Activated CD4-positive, alpha-beta T cell treated with anti-CD3 and anti-CD28 coated beads, Interleukin-2, amount 10 ng/mL, durations not matched to agents 24 days and 14 days (primary cell): ENCODE measurements at regions of chr9 and their contacts with region 1.

Region 1: GRCh38 chr9:21761309-21761901 is 41.0 kb upstream of the MTAP start:
- DNase-seq: peak; percentile 83
- H3K4me3 Mint-ChIP-seq: no peak overlapping the region
- H3K27ac Mint-ChIP-seq: no peak overlapping the region
- H3K4me1 Mint-ChIP-seq: peaks cover 13% of the 10 kb centered on the region
- H3K27me3 Mint-ChIP-seq: peaks cover 73% of the 10 kb centered on the region

Region 2: DNA sequence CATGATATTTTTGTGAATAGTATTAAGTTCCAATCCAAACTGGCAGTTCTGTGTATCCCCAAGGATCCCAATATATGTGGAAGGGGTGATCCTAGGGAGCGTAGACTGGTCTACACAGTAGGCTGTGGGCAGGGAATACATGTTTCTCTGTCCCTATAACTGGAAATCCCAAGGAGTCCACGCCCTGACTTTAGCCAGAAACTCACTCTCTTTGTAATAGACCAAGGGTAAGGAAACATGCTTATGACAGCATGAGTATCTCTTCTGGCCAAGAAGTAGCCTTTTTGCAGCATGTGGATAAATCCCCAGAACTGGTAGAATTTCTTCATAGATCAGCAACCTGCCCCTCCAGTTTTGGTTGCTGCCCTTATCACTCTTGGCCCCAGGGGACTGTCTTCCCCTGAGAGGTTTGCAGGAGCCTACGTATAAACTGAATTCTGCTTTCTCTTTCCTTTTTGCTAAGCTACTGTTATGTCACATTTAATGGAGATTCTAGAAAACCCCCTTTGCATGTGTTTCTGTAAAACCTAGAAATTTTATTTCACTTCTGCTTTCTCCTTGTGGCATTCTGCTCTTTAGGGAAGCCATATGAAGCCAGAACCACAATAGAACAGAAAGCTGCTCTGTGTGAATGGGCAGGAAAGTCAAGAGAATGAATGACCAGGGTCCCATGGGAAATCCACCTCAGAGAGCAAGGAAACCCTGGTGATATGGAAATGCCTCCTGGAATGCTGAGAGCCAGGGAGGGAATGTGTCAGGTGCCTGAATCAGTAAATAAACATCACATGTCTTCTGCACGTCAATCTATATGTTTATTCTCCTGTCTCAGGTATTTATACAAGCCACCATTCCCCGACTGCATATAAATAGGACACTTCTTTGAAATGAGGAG is 379.7 kb before region 1 on chr9:
- intact Hi-C with region 1: loop called (anchors 1 kb)
- DNase-seq: peak; percentile 74
- H3K4me3 Mint-ChIP-seq: no peak overlapping the region
- H3K27ac Mint-ChIP-seq: no peak overlapping the region
- H3K4me1 Mint-ChIP-seq: peaks cover 11% of the 10 kb centered on the region
- H3K27me3 Mint-ChIP-seq: peaks cover 51% of the 10 kb centered on the region

Region 3: GRCh38 chr9:21616082-21616778 is 145.2 kb before region 1 on chr9:
- intact Hi-C with region 1: loop called (anchors 5 kb)
- DNase-seq: no peak
- H3K4me3 Mint-ChIP-seq: no peak overlapping the region
- H3K27ac Mint-ChIP-seq: no peak overlapping the region
- H3K4me1 Mint-ChIP-seq: peaks cover 26% of the 10 kb centered on the region
- H3K27me3 Mint-ChIP-seq: no peaks in the 10 kb centered on the region

Region 4: GRCh38 chr9:21777701-21778100 is 16.3 kb after region 1 on chr9:
- intact Hi-C with region 1: loop called (anchors 2 kb)
- DNase-seq: peak; percentile 66
- H3K4me3 Mint-ChIP-seq: no peak overlapping the region
- H3K27ac Mint-ChIP-seq: no peak overlapping the region
- H3K4me1 Mint-ChIP-seq: peaks cover 5% of the 10 kb centered on the region
- H3K27me3 Mint-ChIP-seq: peaks cover 12% of the 10 kb centered on the region